Head of caudate nucleus (tissue), 42 donors: ENCODE measurements at regions of chr12 and their contacts with region 1.

Region 1: GRCh38 chr12:6752921-6753771 is at the start of gene MLF2:
- DNase-seq: peak; percentile 95 to 99 (median 97)

Region 2: GRCh38 chr12:6554168-6555017 is 198.8 kb before region 1 on chr12:
- intact Hi-C with region 1: no loop called
- DNase-seq: peak in 41 of 42 donors; percentile 61 to 88 (median 75)

Region 3: GRCh38 chr12:6688999-6689882 is 63.9 kb before region 1 on chr12 and contains the start of gene ZNF384:
- intact Hi-C with region 1: no loop called
- DNase-seq: peak; percentile 96 to 100 (median 99)

Region 4: GRCh38 chr12:6778574-6779550 is 25.7 kb after region 1 on chr12:
- intact Hi-C with region 1: loop called (anchors 1 kb)
- DNase-seq: peak; percentile 87 to 97 (median 92)